Ovary (tissue), 10 donors: ENCODE measurements at regions of chr9 and their contacts with region 1.

Region 1: DNA sequence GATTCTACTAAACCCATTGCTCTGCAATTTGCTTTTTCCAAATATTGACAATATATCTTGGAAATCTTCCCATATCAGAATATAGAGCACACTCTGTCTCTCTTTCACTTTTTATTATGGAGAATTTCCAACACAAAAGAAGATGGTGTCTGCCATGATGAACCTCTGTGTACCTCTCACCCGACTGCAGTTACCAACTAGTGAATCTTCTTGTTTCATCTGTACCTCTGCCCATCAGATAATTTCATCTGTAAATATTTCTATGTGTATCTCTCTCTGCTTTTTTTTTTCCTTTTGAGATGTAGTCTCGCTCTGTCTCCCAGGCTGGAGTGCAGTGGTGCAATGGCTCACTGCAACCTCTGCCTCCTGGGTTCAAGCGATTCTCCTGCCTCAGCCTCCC is 62.8 kb downstream of the NTNG2 start:
- DNase-seq: no peak
- H3K4me3 ChIP-seq: no peak overlapping the region
- H3K27ac ChIP-seq: no peak overlapping the region
- H3K4me1 ChIP-seq: peaks cover 2% of the 10 kb centered on the region
- H3K27me3 ChIP-seq: no peaks in the 10 kb centered on the region
- CTCF ChIP-seq: no peak
- EP300 ChIP-seq: no peak
- POLR2A ChIP-seq: no peak

Region 2: DNA sequence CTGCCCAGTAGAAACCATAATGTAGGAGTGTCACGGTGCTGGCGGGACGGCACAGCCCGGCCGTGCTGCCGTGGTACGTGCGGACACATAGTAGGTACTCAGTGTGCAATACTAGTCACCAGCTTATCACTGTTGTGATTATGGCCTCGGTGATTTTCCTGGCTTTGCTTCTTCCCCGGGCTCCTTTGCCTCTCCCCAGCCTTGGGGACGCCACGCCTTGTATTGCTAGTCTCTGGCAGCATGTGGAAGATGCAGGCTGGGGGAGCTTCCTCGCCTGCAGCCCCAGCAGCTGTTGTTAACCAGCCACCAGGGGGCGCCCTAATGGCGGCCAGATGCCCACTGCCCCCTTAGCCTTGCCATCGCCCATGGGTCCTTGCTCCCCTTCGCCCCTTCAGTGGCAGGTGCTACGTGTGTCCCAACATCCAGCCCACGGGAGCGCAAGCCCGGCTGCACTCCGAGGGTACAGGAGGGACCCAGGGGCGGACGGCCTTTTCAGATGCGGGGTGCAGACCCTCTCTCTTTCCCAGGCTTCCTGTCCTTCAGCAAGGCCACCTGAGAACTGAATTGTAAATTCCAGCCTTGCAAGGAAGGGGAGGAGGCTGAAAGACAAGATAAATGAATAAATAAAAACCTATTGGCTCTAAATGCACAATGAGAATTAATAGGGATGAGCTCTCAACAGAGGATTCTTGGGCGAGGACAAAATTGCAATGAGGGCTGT is 54.8 kb before region 1 on chr9:
- intact Hi-C with region 1: loop called in 1 of 4 experiments (anchors 5 kb)
- DNase-seq: peak in 2 of 5 donors; percentile 35 to 50
- H3K4me3 ChIP-seq: no peak overlapping the region
- H3K27ac ChIP-seq: no peak overlapping the region
- H3K4me1 ChIP-seq: no peaks in the 10 kb centered on the region
- H3K27me3 ChIP-seq: no peaks in the 10 kb centered on the region
- CTCF ChIP-seq: peak in 1 of 3 donors; percentile 25
- EP300 ChIP-seq: no peak
- POLR2A ChIP-seq: no peak

Region 3: GRCh38 chr9:132341177-132341840 is 116.7 kb after region 1 on chr9:
- intact Hi-C with region 1: no loop called
- DNase-seq: no peak
- H3K4me3 ChIP-seq: no peak overlapping the region
- H3K27ac ChIP-seq: no peak overlapping the region
- H3K4me1 ChIP-seq: no peaks in the 10 kb centered on the region
- H3K27me3 ChIP-seq: no peaks in the 10 kb centered on the region
- CTCF ChIP-seq: no peak
- EP300 ChIP-seq: no peak
- POLR2A ChIP-seq: no peak